ENCODE measurements at regions of chr14 and their contacts with region 1.

Region 1: GRCh38 chr14:94080471-94081289 is at the start of gene DDX24:
- DNase-seq: peak; percentile 97
- H3K4me3 ChIP-seq: peak within 1 kb of the TSS; percentile 67 to 88 (median 82)
- H3K27ac ChIP-seq: peak within 1 kb of the TSS; percentile 80
- H3K4me1 ChIP-seq: peaks cover 29% of the 10 kb centered on the region
- H3K27me3 ChIP-seq: no peaks in the 10 kb centered on the region
- CTCF ChIP-seq: no peak
- POLR2A ChIP-seq: peak; percentile 95
- total RNA-seq, gene DDX24: 132 and 141 TPM in 2 replicates

Region 2: GRCh38 chr14:93729993-93730392 is 350.7 kb before region 1 on chr14:
- CTCF ChIA-PET with region 1: no interaction called
- POLR2A ChIA-PET with region 1: no interaction called
- dilution Hi-C with region 1: no loop called
- intact Hi-C with region 1: no loop called
- DNase-seq: no peak
- H3K4me3 ChIP-seq: no peak overlapping the region
- H3K27ac ChIP-seq: no peak overlapping the region
- H3K4me1 ChIP-seq: no peaks in the 10 kb centered on the region
- H3K27me3 ChIP-seq: no peaks in the 10 kb centered on the region
- CTCF ChIP-seq: no peak
- POLR2A ChIP-seq: no peak

Region 3: GRCh38 chr14:94110552-94111181 is 30.0 kb after region 1 on chr14 and contains the start of gene IFI27:
- CTCF ChIA-PET with region 1: interaction called, 3 read pairs
- POLR2A ChIA-PET with region 1: interaction called, 5 read pairs
- dilution Hi-C with region 1: no loop called
- intact Hi-C with region 1: loop called (anchors 1 kb)
- DNase-seq: peak; percentile 62
- H3K4me3 ChIP-seq: peak within 1 kb of the TSS; percentile 20 to 76 (median 33)
- H3K27ac ChIP-seq: peak within 1 kb of the TSS; percentile 67
- H3K4me1 ChIP-seq: peaks cover 19% of the 10 kb centered on the region
- H3K27me3 ChIP-seq: no peaks in the 10 kb centered on the region
- CTCF ChIP-seq: no peak
- POLR2A ChIP-seq: peak; percentile 85
- total RNA-seq, gene IFI27: 72.0 and 126 TPM in 2 replicates

Region 4: GRCh38 chr14:94173885-94174603 is 93.4 kb after region 1 on chr14 and contains the start of gene PPP4R4:
- CTCF ChIA-PET with region 1: no interaction called
- POLR2A ChIA-PET with region 1: no interaction called
- dilution Hi-C with region 1: no loop called
- intact Hi-C with region 1: loop called (anchors 5 kb)
- DNase-seq: peak; percentile 64
- H3K4me3 ChIP-seq: peak within 1 kb of the TSS; percentile 8 to 39 (median 24)
- H3K27ac ChIP-seq: no peak within 1 kb of the TSS
- H3K4me1 ChIP-seq: peaks cover 3% of the 10 kb centered on the region
- H3K27me3 ChIP-seq: peaks cover 29 to 61% of the 10 kb centered on the region in 2 experiments
- CTCF ChIP-seq: no peak
- POLR2A ChIP-seq: no peak
- total RNA-seq, gene PPP4R4: not detected in 2 replicates